ENCODE measurements at regions of chr1 and their contacts with region 1.

Region 1: DNA sequence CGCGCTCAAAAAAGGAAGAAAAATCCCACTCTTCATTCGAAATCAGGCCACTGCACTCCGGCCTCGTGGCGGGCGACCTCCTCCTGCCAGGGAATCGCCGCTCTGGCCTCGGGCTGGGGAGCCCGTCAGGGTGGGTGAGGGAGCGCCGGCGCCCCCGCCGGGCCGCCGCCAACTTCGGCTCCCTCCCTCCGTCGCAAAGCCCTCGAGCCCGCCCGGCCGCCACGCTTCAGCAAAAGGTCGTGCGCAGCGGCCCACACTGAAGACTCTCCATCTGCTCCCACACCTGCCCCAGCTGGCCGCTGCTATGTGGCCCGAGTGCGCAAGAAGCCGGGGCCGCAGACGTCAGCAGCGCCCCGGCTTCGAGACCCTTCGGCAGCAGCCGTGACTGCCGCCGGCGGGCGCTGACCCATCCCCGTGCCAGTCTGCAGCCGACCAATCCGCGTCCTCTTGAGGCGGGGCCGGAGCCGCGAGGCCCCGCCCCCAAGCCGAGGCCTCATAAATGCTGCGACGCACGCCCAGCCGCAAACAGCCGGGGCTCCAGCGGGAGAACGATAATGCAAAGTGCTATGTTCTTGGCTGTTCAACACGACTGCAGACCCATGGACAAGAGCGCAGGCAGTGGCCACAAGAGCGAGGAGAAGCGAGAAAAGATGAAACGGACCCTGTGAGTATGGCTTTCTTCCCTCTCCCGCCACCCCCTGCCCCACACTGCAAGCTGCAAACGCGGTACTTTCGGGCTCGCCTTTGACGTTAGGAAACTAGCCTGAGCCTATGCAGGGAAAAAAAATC is at the start of gene RGS2:
- DNase-seq: peak; percentile 79 to 88 (median 85)
- ATAC-seq: peak; percentile 94
- H3K4me3 ChIP-seq: peak within 1 kb of the TSS; percentile 91
- H3K4me3 Mint-ChIP-seq: peak within 1 kb of the TSS; percentile 92 to 99 (median 98)
- H3K27ac ChIP-seq: peak within 1 kb of the TSS; percentile 76
- H3K27ac Mint-ChIP-seq: peak within 1 kb of the TSS; percentile 91 to 98 (median 96)
- H3K4me1 ChIP-seq: peaks cover 0 to 27% of the 10 kb centered on the region in 2 donors
- H3K4me1 Mint-ChIP-seq: peaks cover 17 to 33% (median 26%) of the 10 kb centered on the region in 7 donors
- H3K27me3 ChIP-seq: no peaks in the 10 kb centered on the region
- H3K27me3 Mint-ChIP-seq: peaks cover 0 to 16% (median 0%) of the 10 kb centered on the region in 5 donors
- total RNA-seq, gene RGS2: 3.5 to 317 (median 12.2) TPM

Region 2: DNA sequence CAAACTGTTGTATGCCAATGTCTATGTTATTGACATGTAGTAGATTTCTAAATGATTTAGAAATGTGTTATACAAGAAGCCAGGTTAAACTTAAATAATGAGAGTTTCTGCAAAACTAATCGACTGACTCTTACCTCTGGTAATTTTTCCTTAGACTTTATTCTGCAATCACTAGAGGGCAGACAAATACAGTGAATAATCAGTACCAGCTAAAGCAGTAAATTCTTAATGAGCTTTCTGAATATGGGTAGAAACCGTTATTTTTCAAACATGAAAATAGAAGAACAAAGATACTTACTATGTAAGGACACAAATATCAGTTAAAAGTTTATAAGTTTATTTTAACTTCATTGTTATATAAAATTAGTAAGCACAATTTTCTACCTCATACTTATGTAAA is 331.1 kb before region 1 on chr1:
- CTCF ChIA-PET with region 1: interaction called, 3 read pairs
- POLR2A ChIA-PET with region 1: no interaction called
- intact Hi-C with region 1: loop called (anchors 1 to 2 kb)
- DNase-seq: peak in 6 of 9 donors; percentile 20 to 59 (median 38)
- ATAC-seq: peak; percentile 75
- H3K4me3 ChIP-seq: no peak overlapping the region
- H3K4me3 Mint-ChIP-seq: no peak overlapping the region
- H3K27ac ChIP-seq: no peak overlapping the region
- H3K27ac Mint-ChIP-seq: no peak overlapping the region
- H3K4me1 ChIP-seq: no peaks in the 10 kb centered on the region
- H3K4me1 Mint-ChIP-seq: no peaks in the 10 kb centered on the region
- H3K27me3 ChIP-seq: no peaks in the 10 kb centered on the region
- H3K27me3 Mint-ChIP-seq: peaks cover 0 to 16% (median 0%) of the 10 kb centered on the region in 5 donors

Region 3: DNA sequence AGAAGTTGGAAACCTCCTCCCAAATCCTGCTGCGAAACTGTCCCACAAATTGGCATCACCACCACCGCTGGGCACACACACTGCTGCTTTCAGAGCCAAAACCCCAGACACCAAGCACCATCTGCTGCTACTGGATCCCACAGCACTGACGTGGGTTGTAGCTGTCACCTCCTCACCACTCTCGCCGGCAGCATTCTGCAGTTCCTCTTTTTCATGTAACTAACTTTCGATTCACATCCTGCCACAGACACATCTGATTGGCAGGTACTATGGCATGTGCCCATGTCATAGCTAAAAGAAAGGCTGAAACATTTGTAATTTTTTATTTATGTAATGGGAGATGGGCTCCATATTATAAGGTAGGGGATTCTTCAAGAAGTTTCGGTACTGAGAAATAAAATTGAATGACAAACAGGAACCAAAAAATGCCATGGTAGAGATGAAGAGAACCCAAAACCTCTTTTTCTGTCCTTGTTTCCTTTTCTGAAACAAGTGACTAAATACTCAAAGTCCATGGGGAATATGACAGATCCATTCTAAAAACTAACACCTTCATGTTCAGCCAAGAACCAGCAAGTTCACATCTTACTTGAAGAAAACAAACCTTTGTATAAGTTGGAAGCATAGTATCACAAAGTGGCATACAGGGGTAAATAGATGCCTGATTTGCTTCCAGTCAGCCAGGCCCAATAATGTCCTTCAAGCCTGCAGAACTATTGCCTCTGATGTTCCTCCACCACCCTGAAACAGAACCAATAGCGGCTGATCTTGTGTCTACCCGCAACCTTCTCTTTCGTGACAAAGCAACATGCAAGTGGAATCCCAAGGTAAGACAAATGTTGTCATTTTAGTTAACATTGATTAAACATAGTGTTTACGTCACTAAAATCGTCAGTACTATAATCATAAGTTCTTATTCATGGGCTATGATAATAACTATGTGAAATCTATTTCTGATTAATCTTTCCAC is 199.3 kb before region 1 on chr1:
- CTCF ChIA-PET with region 1: no interaction called
- POLR2A ChIA-PET with region 1: no interaction called
- intact Hi-C with region 1: loop called (anchors 2 to 5 kb)
- DNase-seq: peak; percentile 30 to 80 (median 69)
- ATAC-seq: peak; percentile 96
- H3K4me3 ChIP-seq: peak overlapping the region; percentile 3
- H3K4me3 Mint-ChIP-seq: peak overlapping the region; percentile 52 to 81 (median 65)
- H3K27ac ChIP-seq: peak overlapping the region; percentile 14
- H3K27ac Mint-ChIP-seq: peak overlapping the region; percentile 54 to 91 (median 86)
- H3K4me1 ChIP-seq: peaks cover 10 to 14% of the 10 kb centered on the region in 2 donors
- H3K4me1 Mint-ChIP-seq: peaks cover 12 to 16% (median 15%) of the 10 kb centered on the region in 7 donors
- H3K27me3 ChIP-seq: no peaks in the 10 kb centered on the region
- H3K27me3 Mint-ChIP-seq: peaks cover 0 to 2% (median 0%) of the 10 kb centered on the region in 5 donors

Region 4: DNA sequence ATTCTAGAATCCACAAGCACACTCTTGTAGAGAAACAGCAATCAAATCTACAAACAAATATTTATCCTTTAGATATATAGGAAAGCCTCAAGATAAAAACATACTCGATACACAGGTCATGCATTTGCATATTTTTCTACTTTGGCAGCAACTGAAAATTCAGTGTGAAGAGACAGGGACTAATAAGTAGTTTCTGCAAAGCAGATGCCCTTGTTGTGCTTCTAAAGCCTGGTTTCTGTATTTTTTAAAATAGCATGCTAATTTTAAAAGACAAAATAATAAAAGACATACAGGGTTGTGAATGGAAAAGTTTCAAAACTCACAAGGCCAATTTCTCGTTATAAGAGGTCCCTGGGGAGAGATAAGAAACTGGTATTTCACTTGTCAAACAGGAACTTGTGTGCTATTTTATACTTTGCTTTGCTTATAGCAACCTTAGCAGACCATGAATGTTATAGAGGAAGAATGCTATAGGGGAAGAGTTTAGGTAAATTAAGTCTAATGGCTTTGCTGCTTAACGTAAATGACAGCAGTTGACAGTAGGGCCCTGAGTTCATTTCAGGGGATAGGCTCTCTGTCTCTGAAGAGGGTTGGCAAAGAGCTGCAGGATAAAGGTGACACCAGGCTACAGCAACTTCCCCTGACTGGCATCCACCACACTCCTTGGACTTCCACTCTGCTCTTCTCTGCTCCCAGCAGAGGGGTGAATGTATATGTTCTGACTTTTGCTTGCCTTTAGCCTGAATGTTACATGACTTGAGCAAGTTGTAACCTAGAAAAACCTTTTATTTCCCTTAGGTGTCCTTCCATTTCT is 182.1 kb before region 1 on chr1:
- CTCF ChIA-PET with region 1: no interaction called
- POLR2A ChIA-PET with region 1: no interaction called
- intact Hi-C with region 1: no loop called
- DNase-seq: no peak
- ATAC-seq: no peak
- H3K4me3 ChIP-seq: no peak overlapping the region
- H3K4me3 Mint-ChIP-seq: no peak overlapping the region
- H3K27ac ChIP-seq: no peak overlapping the region
- H3K27ac Mint-ChIP-seq: no peak overlapping the region
- H3K4me1 ChIP-seq: no peaks in the 10 kb centered on the region
- H3K4me1 Mint-ChIP-seq: no peaks in the 10 kb centered on the region
- H3K27me3 ChIP-seq: no peaks in the 10 kb centered on the region
- H3K27me3 Mint-ChIP-seq: peaks cover 0 to 38% (median 23%) of the 10 kb centered on the region in 5 donors

Region 5: GRCh38 chr1:192998536-192998935 is 189.8 kb after region 1 on chr1:
- CTCF ChIA-PET with region 1: no interaction called
- POLR2A ChIA-PET with region 1: no interaction called
- intact Hi-C with region 1: no loop called
- DNase-seq: no peak
- ATAC-seq: no peak
- H3K4me3 ChIP-seq: no peak overlapping the region
- H3K4me3 Mint-ChIP-seq: no peak overlapping the region
- H3K27ac ChIP-seq: no peak overlapping the region
- H3K27ac Mint-ChIP-seq: no peak overlapping the region
- H3K4me1 ChIP-seq: no peaks in the 10 kb centered on the region
- H3K4me1 Mint-ChIP-seq: peaks cover 0 to 12% (median 0%) of the 10 kb centered on the region in 7 donors
- H3K27me3 ChIP-seq: no peaks in the 10 kb centered on the region
- H3K27me3 Mint-ChIP-seq: no peaks in the 10 kb centered on the region

Region 6: DNA sequence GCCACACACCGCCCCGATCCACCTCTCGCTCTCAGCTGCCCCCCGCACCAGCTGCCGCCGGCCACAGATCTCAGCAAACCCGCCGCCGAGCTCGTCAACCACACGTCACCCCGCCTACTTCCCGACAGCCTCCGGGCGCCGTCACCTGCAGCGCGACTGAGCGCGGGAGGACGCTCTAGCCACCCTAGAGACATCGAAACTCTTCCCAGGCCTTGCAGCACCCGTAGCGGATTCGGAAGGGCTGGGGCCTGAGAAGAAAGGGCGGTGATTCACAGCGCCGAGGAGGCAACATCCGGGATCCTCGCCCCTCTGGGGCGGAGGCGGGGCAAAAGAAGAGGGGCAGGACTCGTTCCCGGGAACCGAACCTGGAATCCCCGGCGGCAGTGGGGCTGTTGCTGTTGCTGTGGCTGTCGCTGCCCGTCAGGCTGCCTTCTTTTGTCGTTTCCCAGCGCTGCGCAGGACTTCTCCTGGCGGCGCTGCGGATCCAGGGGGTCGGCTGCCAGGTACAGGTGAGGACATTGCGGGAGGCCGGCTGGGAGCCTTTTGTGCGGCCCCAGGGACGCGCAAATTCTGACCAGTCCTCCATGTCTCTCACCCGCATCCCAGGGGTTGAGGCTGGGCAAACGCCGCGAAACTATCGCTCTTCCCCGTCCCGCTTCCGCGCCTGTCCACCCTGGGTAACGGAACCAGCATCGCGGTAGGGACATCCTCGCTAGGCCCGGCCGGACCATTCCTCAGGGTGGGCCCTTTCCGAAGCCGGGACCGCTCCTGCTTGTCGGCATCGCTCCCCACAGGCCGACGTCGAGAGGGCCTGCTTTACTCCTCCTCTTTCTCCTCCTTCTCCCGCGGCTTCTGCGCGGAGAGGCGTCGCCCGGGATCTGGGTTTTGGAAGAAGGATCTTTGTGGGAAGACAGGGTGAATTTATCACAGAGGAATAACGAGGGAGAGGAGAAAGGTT is 250.8 kb after region 1 on chr1 and contains the starts of genes RO60 and UCHL5:
- CTCF ChIA-PET with region 1: interaction called, 4 read pairs
- POLR2A ChIA-PET with region 1: interaction called, 14 read pairs
- intact Hi-C with region 1: loop called (anchors 1 kb)
- DNase-seq: peak; percentile 79 to 96 (median 94)
- ATAC-seq: peak; percentile 98
- H3K4me3 ChIP-seq: peak within 1 kb of the TSS; percentile 96
- H3K4me3 Mint-ChIP-seq: peak within 1 kb of the TSS; percentile 93 to 100 (median 98)
- H3K27ac ChIP-seq: peak within 1 kb of the TSS; percentile 89
- H3K27ac Mint-ChIP-seq: peak within 1 kb of the TSS; percentile 97 to 100 (median 98)
- H3K4me1 ChIP-seq: peaks cover 22 to 30% of the 10 kb centered on the region in 2 donors
- H3K4me1 Mint-ChIP-seq: peaks cover 47 to 78% (median 72%) of the 10 kb centered on the region in 7 donors
- H3K27me3 ChIP-seq: no peaks in the 10 kb centered on the region
- H3K27me3 Mint-ChIP-seq: no peaks in the 10 kb centered on the region
- total RNA-seq, gene RO60: 49.8 to 75.1 (median 67.2) TPM
- total RNA-seq, gene UCHL5: 20.2 to 48.6 (median 31.8) TPM

Region 7: GRCh38 chr1:193260056-193260745 is 451.5 kb after region 1 on chr1:
- CTCF ChIA-PET with region 1: no interaction called
- POLR2A ChIA-PET with region 1: no interaction called
- intact Hi-C with region 1: loop called in 1 of 2 experiments (anchors 5 kb)
- DNase-seq: no peak
- ATAC-seq: no peak
- H3K4me3 ChIP-seq: no peak overlapping the region
- H3K4me3 Mint-ChIP-seq: no peak overlapping the region
- H3K27ac ChIP-seq: no peak overlapping the region
- H3K27ac Mint-ChIP-seq: no peak overlapping the region
- H3K4me1 ChIP-seq: no peaks in the 10 kb centered on the region
- H3K4me1 Mint-ChIP-seq: peaks cover 0 to 7% (median 0%) of the 10 kb centered on the region in 7 donors
- H3K27me3 ChIP-seq: no peaks in the 10 kb centered on the region
- H3K27me3 Mint-ChIP-seq: no peaks in the 10 kb centered on the region

Region 8: DNA sequence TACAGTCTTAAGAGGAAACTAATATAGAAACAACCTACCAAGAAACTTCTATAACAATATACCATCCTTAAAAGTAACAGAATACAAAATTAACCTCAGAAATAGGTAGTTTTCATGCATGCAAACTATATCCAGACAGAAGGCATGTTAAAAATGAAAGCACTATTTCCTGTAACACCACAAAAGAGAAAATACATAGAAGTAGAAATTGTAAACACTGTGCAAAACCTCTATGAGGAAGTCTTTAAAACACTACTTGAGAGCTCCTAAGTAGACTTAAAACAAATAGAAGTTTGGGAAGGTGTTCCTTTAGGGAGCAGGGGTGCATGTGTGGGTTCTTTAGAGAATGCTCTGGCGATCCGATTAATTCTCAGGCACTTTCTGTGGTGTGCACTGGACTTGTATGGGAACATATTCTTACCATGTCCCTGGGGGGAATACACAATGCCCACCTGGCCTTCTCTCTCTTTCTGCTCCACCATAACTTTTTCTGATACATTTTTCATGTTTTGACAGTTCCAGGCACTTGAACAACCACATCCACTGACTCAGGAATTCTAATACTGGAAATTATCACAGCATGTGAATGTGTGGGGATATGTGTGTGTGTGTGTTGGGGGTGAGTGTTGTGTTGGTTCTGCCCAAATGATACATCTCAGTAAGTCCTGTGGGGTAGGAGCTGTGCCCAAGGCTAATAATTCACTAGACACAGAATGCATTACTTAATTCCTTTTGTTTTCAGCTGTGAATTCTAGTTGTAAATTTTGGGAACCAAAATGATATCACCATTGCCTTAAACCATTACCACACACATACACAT is 1244.0 kb after region 1 on chr1:
- CTCF ChIA-PET with region 1: no interaction called
- POLR2A ChIA-PET with region 1: no interaction called
- intact Hi-C with region 1: loop called in 1 of 2 experiments (anchors 5 kb)
- DNase-seq: peak in 6 of 9 donors; percentile 21 to 54 (median 44)
- ATAC-seq: peak; percentile 56
- H3K4me3 ChIP-seq: peak overlapping the region; percentile 9
- H3K4me3 Mint-ChIP-seq: peak overlapping the region; percentile 41 to 83 (median 71)
- H3K27ac ChIP-seq: peak overlapping the region; percentile 63
- H3K27ac Mint-ChIP-seq: peak overlapping the region; percentile 93 to 98 (median 96)
- H3K4me1 ChIP-seq: peaks cover 7 to 61% of the 10 kb centered on the region in 2 donors
- H3K4me1 Mint-ChIP-seq: peaks cover 43 to 82% (median 69%) of the 10 kb centered on the region in 7 donors
- H3K27me3 ChIP-seq: no peaks in the 10 kb centered on the region
- H3K27me3 Mint-ChIP-seq: no peaks in the 10 kb centered on the region